Natural killer cell (primary cell): ENCODE measurements at regions of chr2 and their contacts with region 1.

Region 1: GRCh38 chr2:234620018-234620417 is 123.1 kb upstream of the ARL4C start:
- DNase-seq: no peak
- ATAC-seq: peak; percentile 64 to 78 (median 67)
- H3K4me3 ChIP-seq: no peak overlapping the region
- H3K4me3 Mint-ChIP-seq: peak overlapping the region; percentile 10
- H3K27ac ChIP-seq: no peak overlapping the region
- H3K27ac Mint-ChIP-seq: peak overlapping the region; percentile 1 to 23
- H3K4me1 ChIP-seq: no peaks in the 10 kb centered on the region
- H3K4me1 Mint-ChIP-seq: peaks cover 11 to 12% of the 10 kb centered on the region in 2 donors
- H3K27me3 ChIP-seq: no peaks in the 10 kb centered on the region
- H3K27me3 Mint-ChIP-seq: peaks cover 0 to 3% of the 10 kb centered on the region in 2 donors
- CTCF ChIP-seq: no peak

Region 2: DNA sequence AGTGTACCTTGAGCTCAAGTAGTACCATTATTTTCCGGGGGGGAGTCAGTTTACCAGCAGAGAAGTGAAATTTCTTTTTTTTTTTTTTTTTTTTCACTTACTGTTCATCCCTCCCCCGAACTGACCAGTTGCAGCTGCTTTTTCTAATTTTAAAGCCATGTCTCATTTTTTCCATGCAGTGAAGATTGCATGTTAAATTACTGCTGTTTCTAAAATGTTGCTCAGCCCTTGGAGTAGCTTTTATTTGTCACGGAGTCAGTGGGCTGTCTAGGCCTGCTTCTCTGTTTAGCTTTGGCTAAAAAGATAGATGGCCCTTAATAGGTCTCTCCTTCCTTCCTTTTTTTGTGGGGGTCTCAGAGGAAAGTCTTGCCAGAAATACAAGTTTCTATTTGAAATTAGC is 1677.2 kb before region 1 on chr2:
- intact Hi-C with region 1: loop called (anchors 10 kb)
- DNase-seq: no peak
- ATAC-seq: no peak
- H3K4me3 ChIP-seq: no peak overlapping the region
- H3K4me3 Mint-ChIP-seq: no peak overlapping the region
- H3K27ac ChIP-seq: no peak overlapping the region
- H3K27ac Mint-ChIP-seq: no peak overlapping the region
- H3K4me1 ChIP-seq: no peaks in the 10 kb centered on the region
- H3K4me1 Mint-ChIP-seq: no peaks in the 10 kb centered on the region
- H3K27me3 ChIP-seq: peaks cover 2% of the 10 kb centered on the region
- H3K27me3 Mint-ChIP-seq: peaks cover 4 to 5% of the 10 kb centered on the region in 2 donors
- CTCF ChIP-seq: no peak

Region 3: DNA sequence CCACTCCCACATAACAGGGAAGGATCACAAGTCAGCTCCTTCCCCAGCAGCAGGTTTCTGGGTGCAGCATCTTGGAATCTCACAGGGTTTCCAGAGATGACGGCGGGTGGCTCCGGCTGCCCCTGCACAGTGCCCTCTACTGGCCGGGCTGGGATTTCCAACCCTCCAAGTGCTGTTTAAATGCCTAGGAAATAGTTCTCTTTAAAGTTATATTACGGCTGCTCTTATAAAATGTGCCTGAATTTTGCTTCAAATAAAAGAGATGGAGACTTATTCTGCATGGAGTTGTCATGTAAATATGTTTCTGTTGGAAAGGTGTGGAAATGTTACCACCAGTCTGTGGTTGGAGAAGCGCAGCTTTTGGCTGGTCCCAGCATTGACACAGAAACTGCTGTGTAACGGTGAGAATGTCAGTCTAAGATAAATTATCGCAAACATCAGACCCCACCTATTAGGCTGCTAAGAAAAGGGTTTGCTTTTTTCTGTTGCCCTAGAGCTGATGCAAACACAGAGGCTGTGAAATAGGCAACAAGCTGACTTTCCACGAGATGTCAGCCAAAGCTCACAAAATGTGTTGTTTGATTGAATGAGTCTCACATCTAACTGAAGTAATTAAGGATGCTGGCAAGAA is 762.4 kb before region 1 on chr2:
- intact Hi-C with region 1: no loop called
- DNase-seq: peak; percentile 45 to 68
- ATAC-seq: peak in 1 of 3 donors; percentile 53
- H3K4me3 ChIP-seq: no peak overlapping the region
- H3K4me3 Mint-ChIP-seq: no peak overlapping the region
- H3K27ac ChIP-seq: no peak overlapping the region
- H3K27ac Mint-ChIP-seq: no peak overlapping the region
- H3K4me1 ChIP-seq: peaks cover 19% of the 10 kb centered on the region
- H3K4me1 Mint-ChIP-seq: peaks cover 18 to 24% of the 10 kb centered on the region in 2 donors
- H3K27me3 ChIP-seq: no peaks in the 10 kb centered on the region
- H3K27me3 Mint-ChIP-seq: peaks cover 0 to 7% of the 10 kb centered on the region in 2 donors
- CTCF ChIP-seq: peak; percentile 83